IMR-90 (cell line): ENCODE measurements at regions of chr2 and their contacts with region 1.

Region 1: DNA sequence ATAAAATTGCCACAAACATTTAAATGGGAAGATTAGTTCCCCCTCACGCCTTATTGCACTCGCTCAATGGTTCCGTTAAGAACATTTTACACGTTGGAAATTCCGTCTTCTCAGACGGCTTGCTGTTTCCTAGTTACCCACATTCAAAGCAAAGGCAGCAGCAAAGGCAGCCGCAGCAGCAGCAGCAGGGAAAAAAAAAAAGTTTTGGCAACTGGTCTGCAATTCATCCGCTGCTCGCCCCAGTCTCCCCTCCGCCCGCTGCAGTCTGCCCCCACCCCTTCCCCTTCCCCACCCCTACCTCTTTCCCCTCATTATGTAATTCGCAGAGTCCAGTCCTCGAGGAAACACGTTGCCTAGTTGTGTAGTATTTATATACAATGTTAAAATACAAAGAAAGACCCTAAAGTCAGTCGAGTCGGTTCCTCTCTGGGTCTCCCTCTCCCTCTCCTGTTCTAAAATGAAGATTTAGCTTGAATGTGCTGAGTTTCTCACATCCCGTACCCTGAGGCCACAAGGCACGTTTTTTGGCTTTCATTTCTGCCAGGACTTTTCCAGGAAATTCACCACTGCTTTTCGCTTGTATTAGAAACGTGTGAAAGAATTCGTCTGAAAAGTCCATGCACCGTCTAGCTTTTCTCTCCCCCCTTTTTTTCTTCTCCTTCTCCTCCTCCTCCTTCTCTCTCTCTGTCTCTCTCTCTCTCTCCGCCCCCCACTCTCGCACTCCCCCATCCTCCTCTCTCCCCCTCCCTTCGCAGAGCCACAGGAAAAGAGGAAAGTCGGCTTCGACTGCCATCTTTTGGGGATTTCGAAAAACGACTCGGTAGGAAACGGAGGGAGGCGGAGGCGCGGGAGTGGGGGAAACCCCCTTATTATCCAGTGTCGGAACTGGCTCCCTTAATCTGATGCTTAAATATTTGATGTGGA is 140.0 kb downstream of the MEIS1 start:
- DNase-seq: peak; percentile 91
- ATAC-seq: peak; percentile 42
- H3K4me3 ChIP-seq: peak overlapping the region; percentile 44
- H3K27ac ChIP-seq: peak overlapping the region; percentile 96
- H3K4me1 ChIP-seq: peaks cover 22% of the 10 kb centered on the region
- H3K27me3 ChIP-seq: no peaks in the 10 kb centered on the region
- CTCF ChIP-seq: peak; percentile 69
- POLR2A ChIP-seq: peak; percentile 56; the same call in 1 of the 2 replicates
- RAD21 ChIP-seq: peak; percentile 71

Region 2: DNA sequence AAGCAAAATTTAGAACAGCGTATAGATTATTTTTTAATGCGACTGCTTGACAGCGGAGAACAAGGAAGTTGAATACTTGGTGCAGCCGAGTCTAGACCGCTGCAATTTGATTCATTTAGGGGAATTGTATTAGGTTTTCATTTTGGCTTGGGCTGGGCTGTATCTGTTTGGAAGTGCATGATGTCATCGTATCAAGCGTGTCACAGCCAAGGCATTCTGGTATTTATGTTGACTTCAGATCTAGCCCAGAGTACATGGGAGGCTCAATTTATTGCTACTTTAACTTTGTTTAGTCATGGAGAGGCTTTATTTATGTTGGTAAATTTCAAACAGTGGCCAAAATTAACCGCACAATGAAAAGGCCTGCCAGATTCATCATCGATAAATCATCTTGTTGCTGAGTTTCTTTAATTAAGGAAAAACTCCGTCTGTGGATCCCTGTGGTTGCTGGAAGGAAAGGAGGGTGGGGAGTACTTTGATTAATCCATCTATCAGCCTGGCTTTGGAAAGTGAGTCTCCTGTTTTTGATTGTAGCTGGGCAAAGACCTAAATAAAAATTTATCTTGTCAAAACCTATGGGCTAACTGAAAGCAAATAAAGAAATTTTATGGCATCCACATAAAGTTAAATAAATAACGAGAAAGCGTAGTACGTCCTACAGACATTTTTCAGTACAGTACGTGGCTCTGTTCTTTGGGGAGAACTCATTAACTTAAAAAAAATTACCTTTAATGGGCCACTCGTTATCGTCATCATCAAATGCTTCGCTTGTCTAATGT is 912.1 kb before region 1 on chr2:
- CTCF ChIA-PET with region 1: no interaction called
- POLR2A ChIA-PET with region 1: no interaction called
- dilution Hi-C with region 1: no loop called
- in situ Hi-C with region 1: no loop called
- intact Hi-C with region 1: loop called (anchors 5 kb)
- DNase-seq: peak; percentile 93
- ATAC-seq: peak; percentile 91
- H3K4me3 ChIP-seq: no peak overlapping the region
- H3K27ac ChIP-seq: no peak overlapping the region
- H3K4me1 ChIP-seq: peaks cover 20% of the 10 kb centered on the region
- H3K27me3 ChIP-seq: peaks cover 4% of the 10 kb centered on the region
- CTCF ChIP-seq: no peak
- POLR2A ChIP-seq: no peak
- RAD21 ChIP-seq: no peak

Region 3: DNA sequence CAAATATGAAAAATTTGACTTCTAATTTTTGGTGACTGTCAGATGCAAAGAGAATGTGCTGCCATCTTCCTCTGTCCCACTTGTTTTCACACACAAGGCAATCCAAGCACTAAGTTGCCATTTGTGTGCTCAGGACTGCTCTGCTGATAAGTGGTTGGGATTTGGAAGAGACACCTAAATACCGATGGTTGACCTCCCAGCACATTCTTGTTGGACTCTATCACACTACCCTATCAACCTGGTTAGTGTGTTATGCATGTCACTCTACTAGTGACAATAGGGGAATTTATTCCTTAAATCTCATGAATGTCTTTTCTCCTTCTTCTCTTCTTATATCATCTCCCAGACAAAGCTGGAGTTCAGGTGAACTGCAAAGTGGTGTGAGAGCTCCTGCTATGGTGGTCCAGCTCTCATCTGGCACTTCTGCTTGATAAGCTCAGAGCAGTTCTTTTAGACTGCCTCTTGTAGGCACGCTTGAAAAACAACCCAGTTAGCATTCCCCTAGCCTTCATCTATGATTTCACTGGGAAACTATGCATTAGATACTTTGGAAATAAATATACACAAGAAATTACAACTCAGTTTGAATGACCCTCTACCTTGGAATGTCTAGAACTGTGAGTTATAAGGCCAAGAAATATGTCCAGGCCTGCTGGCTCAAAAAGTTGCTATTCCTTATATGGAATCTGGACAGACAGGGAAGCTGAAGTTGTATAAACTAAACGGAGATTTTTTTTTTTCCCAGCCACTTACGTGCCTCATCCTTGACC is 264.8 kb after region 1 on chr2:
- CTCF ChIA-PET with region 1: no interaction called
- POLR2A ChIA-PET with region 1: no interaction called
- dilution Hi-C with region 1: no loop called
- in situ Hi-C with region 1: loop called (anchors 10 kb)
- intact Hi-C with region 1: loop called (anchors 1 kb)
- DNase-seq: peak; percentile 100
- ATAC-seq: peak; percentile 93
- H3K4me3 ChIP-seq: 0 out of 2 replicates have a peak overlapping the region, but pooled peaks have one; percentile 37
- H3K27ac ChIP-seq: peak overlapping the region; percentile 89
- H3K4me1 ChIP-seq: peaks cover 11% of the 10 kb centered on the region
- H3K27me3 ChIP-seq: no peaks in the 10 kb centered on the region
- CTCF ChIP-seq: 0 out of 2 replicates have a peak, but pooled peaks have one; percentile 1
- POLR2A ChIP-seq: peak; percentile 73
- RAD21 ChIP-seq: no peak; the same call in 1 of the 2 replicates

Region 4: DNA sequence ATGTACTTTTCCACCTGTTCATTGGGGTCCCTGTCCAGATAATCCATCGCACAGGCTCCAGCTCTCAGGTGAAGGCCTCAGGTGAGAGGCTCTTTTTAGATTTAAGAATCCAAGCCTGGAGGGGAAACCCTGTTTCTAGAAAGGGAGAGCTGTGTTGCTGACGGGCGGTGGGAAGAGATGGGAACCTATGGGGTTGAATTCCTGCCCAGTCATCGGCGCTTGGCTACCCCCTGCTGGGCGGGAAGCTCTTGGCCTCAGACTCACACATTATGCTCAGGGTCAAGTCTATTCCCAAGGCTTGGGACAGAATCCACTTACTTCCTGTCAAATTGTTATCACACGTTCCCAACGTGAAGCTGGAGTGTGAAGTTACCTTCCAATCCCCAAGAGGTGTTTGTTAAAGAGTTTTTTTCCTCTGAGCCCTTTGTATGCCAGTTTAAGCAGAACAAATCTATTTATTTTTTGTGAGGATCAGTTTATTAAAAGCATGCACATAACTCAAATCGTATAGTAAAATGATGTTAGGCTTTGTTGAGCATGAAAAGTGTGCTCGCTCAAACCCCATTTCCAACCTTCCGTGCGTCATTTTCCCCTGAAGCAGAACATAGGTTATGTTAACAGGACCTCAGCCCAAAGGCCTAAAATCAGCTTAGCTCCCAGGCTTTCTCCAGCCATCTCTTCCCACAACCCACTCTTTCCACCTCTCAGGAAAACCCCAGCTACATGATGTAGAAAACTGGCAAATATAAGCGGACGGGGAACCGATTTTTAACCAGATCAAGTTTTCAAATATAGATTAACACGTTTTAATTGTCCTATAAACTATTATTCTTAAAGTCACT is 640.5 kb after region 1 on chr2:
- CTCF ChIA-PET with region 1: interaction called, 5 read pairs
- POLR2A ChIA-PET with region 1: no interaction called
- dilution Hi-C with region 1: no loop called
- in situ Hi-C with region 1: loop called (anchors 5 kb)
- intact Hi-C with region 1: loop called (anchors 1 kb)
- DNase-seq: peak; percentile 92
- ATAC-seq: peak; percentile 95
- H3K4me3 ChIP-seq: no peak overlapping the region
- H3K27ac ChIP-seq: peak overlapping the region; percentile 86
- H3K4me1 ChIP-seq: peaks cover 16% of the 10 kb centered on the region
- H3K27me3 ChIP-seq: no peaks in the 10 kb centered on the region
- CTCF ChIP-seq: peak; percentile 88
- POLR2A ChIP-seq: no peak
- RAD21 ChIP-seq: peak; percentile 95

Region 5: GRCh38 chr2:67451086-67451832 is 876.3 kb after region 1 on chr2:
- CTCF ChIA-PET with region 1: no interaction called
- POLR2A ChIA-PET with region 1: no interaction called
- dilution Hi-C with region 1: no loop called
- in situ Hi-C with region 1: loop called (anchors 25 kb)
- intact Hi-C with region 1: no loop called
- DNase-seq: peak; percentile 85
- ATAC-seq: no peak
- H3K4me3 ChIP-seq: no peak overlapping the region
- H3K27ac ChIP-seq: no peak overlapping the region
- H3K4me1 ChIP-seq: peaks cover 3% of the 10 kb centered on the region; the same call in 1 of the 2 replicates
- H3K27me3 ChIP-seq: no peaks in the 10 kb centered on the region
- CTCF ChIP-seq: no peak
- POLR2A ChIP-seq: no peak
- RAD21 ChIP-seq: no peak

Region 6: DNA sequence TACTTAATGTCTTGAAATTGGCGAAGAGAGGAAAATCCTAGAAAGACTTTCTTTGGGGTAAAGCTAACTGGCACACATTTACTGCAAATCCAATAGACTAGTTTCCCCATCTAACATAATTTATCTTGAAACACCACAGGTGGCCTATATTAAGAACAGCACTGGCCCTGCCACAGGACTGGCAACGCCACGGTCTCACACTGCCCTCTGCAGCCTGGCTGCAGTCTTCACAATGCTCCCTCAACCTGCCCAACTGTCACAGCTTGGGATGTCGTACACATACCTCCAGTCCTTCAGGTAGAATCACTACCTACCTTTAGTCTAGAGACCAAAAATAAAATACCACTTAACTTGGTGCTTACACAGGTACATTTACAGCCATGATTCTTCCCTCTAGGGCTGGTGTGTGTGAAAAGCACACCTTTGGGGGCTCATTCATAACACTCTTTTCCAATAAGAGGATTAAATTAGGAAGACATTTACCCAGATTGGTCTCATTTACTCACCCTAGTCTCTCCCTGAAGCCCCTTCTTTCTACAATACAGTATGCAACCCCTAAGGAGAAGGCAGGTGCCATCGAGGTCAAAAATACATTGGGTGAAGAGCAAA is 1265.6 kb after region 1 on chr2:
- CTCF ChIA-PET with region 1: no interaction called
- POLR2A ChIA-PET with region 1: no interaction called
- dilution Hi-C with region 1: no loop called
- in situ Hi-C with region 1: loop called (anchors 10 kb)
- intact Hi-C with region 1: loop called (anchors 2 kb)
- DNase-seq: peak; percentile 82
- ATAC-seq: peak; percentile 92
- H3K4me3 ChIP-seq: no peak overlapping the region
- H3K27ac ChIP-seq: no peak overlapping the region
- H3K4me1 ChIP-seq: peaks cover 4% of the 10 kb centered on the region; the same call in 1 of the 2 replicates
- H3K27me3 ChIP-seq: no peaks in the 10 kb centered on the region
- CTCF ChIP-seq: peak; percentile 95
- POLR2A ChIP-seq: 0 out of 2 replicates have a peak, but pooled peaks have one; percentile 36
- RAD21 ChIP-seq: peak; percentile 98